Activated T-helper 1 cell treated with anti-CD3 and anti-CD28 coated beads, Interleukin-12 subunit alpha, Interleukin-12 subunit beta, Interleukin-2, Interleukin-4 antibody, amounts not matched to agents 30 ng/mL and 10 ng/mL and 1 ng/mL, durations not matched to agents 14 hours and 24 hours and 36 hours (primary cell): ENCODE measurements at regions of chr7 and their contacts with region 1.

Region 1: GRCh38 chr7:32694182-32694581 is 197.4 kb downstream of the KBTBD2 start:
- DNase-seq: no peak
- H3K4me3 Mint-ChIP-seq: no peak overlapping the region
- H3K27ac Mint-ChIP-seq: no peak overlapping the region
- H3K4me1 Mint-ChIP-seq: peaks cover 7% of the 10 kb centered on the region
- H3K27me3 Mint-ChIP-seq: peaks cover 4% of the 10 kb centered on the region

Region 2: DNA sequence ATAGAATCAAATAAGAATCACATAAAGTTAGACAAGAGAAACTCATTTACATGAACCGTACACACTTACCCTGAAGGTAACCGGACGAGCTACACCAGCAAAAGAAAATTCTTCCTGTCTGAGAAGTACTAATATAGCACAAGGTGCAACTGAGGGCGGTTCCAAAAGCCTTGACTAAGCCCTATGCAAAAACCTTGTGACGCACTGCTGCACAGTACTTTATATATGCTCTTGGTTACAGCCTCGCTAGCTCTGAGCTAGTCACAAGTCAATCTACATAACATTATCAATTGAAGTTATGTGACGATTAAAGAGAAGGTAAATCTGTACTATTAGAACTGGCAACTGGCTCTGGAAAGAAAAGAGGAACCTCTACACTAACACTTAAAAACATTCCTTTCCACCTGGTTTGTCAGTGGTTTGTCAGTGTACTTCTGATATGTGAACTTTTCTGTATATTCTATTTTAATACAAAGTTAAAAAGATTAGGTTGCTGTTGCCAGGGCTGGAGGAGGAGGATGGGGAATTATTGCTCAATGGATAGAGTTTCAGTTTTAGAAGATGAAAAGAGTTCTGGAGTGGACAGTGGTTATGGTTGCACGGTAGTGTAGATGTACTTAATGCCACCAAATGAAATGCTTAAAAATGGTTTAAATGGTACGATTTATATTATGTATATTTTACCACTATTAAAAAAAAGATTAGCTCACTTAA is 346.8 kb after region 1 on chr7:
- intact Hi-C with region 1: loop called (anchors 5 kb)
- DNase-seq: peak; percentile 67
- H3K4me3 Mint-ChIP-seq: peak overlapping the region; percentile 80
- H3K27ac Mint-ChIP-seq: peak overlapping the region; percentile 73
- H3K4me1 Mint-ChIP-seq: peaks cover 65% of the 10 kb centered on the region
- H3K27me3 Mint-ChIP-seq: no peaks in the 10 kb centered on the region

Region 3: GRCh38 chr7:34036051-34036945 is 1342.1 kb after region 1 on chr7:
- intact Hi-C with region 1: no loop called
- DNase-seq: no peak
- H3K4me3 Mint-ChIP-seq: no peak overlapping the region
- H3K27ac Mint-ChIP-seq: no peak overlapping the region
- H3K4me1 Mint-ChIP-seq: no peaks in the 10 kb centered on the region
- H3K27me3 Mint-ChIP-seq: no peaks in the 10 kb centered on the region